ENCODE measurements at regions of chr14 and their contacts with region 1.

Region 1: DNA sequence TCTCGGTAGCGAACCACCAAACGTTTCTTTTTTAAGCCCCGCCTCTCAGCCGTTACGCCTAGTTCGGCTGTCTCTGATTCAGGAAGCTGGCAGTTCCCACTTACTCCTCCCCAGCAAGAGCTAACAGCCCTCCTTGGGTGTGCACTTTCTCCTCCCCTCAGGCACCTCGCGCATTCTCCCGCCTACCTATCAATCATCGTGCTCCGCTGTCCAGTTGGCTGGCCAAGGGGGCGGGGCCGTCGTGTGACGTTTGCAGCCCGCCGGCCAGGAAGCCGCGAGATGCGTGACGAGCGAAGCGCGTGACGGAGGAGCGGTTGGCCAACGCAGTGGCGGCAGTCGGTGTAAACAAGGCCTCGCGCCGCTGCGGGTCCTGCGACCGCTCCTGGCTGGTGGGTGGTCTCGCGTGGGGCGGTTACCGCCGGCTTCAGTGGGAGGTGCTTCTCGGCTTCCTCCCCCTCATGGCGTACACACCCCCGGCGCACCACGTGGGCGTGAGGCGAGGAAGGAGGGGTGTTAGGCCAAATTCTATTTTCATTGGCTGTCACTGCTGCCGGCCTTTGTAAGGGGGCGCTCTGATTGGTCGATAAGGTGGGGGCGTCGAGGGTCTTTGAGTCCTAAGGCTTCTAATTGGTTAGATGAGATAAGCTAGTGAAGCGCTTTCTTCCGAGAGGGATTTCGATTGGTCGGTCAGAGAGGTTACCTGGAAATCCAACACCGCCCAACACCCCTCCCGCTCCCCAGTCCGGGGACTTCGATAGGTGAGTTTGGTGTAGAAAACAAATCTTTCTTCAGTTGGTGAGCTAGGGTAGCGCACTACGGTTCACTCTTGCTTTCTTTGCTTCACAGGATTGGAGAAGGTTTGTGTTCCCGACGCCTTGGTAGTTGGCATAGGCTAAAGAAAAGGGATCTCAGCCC is at the starts of genes DCAF11 and NRL:
- DNase-seq: peak; percentile 95 to 100 (median 98)
- ATAC-seq: peak; percentile 81
- H3K4me3 ChIP-seq: peak within 1 kb of the TSS; percentile 77
- H3K4me3 Mint-ChIP-seq: peak within 1 kb of the TSS; percentile 98
- H3K27ac ChIP-seq: peak within 1 kb of the TSS; percentile 98 to 99
- H3K27ac Mint-ChIP-seq: peak within 1 kb of the TSS; percentile 98
- H3K4me1 ChIP-seq: peaks cover 42% of the 10 kb centered on the region
- H3K4me1 Mint-ChIP-seq: peaks cover 35% of the 10 kb centered on the region
- H3K27me3 ChIP-seq: no peaks in the 10 kb centered on the region
- H3K27me3 Mint-ChIP-seq: no peaks in the 10 kb centered on the region
- CTCF ChIP-seq: no peak
- total RNA-seq, gene DCAF11: 74.8 to 75.3 TPM
- total RNA-seq, gene NRL: 1.6 to 1.9 TPM

Region 2: GRCh38 chr14:23376482-23377197 is 738.2 kb before region 1 on chr14 and contains the start of gene CMTM5:
- CTCF ChIA-PET with region 1: no interaction called
- POLR2A ChIA-PET with region 1: no interaction called
- intact Hi-C with region 1: no loop called
- DNase-seq: no peak
- ATAC-seq: no peak
- H3K4me3 ChIP-seq: no peak within 1 kb of the TSS
- H3K4me3 Mint-ChIP-seq: no peak within 1 kb of the TSS
- H3K27ac ChIP-seq: no peak within 1 kb of the TSS
- H3K27ac Mint-ChIP-seq: no peak within 1 kb of the TSS
- H3K4me1 ChIP-seq: no peaks in the 10 kb centered on the region
- H3K4me1 Mint-ChIP-seq: no peaks in the 10 kb centered on the region
- H3K27me3 ChIP-seq: no peaks in the 10 kb centered on the region
- H3K27me3 Mint-ChIP-seq: peaks cover 9% of the 10 kb centered on the region
- CTCF ChIP-seq: no peak
- total RNA-seq, gene CMTM5: not detected

Region 3: GRCh38 chr14:23469127-23469905 is 645.5 kb before region 1 on chr14 and contains the start of gene NGDN:
- CTCF ChIA-PET with region 1: no interaction called
- POLR2A ChIA-PET with region 1: interaction called, 3 read pairs
- intact Hi-C with region 1: loop called in 1 of 2 experiments (anchors 5 kb)
- DNase-seq: peak; percentile 81 to 99 (median 88)
- ATAC-seq: peak; percentile 90
- H3K4me3 ChIP-seq: peak within 1 kb of the TSS; percentile 87
- H3K4me3 Mint-ChIP-seq: no peak within 1 kb of the TSS
- H3K27ac ChIP-seq: peak within 1 kb of the TSS; percentile 67 to 92
- H3K27ac Mint-ChIP-seq: no peak within 1 kb of the TSS
- H3K4me1 ChIP-seq: peaks cover 14% of the 10 kb centered on the region
- H3K4me1 Mint-ChIP-seq: peaks cover 7% of the 10 kb centered on the region
- H3K27me3 ChIP-seq: no peaks in the 10 kb centered on the region
- H3K27me3 Mint-ChIP-seq: no peaks in the 10 kb centered on the region
- CTCF ChIP-seq: peak; percentile 74
- total RNA-seq, gene NGDN: 146 to 149 TPM

Region 4: DNA sequence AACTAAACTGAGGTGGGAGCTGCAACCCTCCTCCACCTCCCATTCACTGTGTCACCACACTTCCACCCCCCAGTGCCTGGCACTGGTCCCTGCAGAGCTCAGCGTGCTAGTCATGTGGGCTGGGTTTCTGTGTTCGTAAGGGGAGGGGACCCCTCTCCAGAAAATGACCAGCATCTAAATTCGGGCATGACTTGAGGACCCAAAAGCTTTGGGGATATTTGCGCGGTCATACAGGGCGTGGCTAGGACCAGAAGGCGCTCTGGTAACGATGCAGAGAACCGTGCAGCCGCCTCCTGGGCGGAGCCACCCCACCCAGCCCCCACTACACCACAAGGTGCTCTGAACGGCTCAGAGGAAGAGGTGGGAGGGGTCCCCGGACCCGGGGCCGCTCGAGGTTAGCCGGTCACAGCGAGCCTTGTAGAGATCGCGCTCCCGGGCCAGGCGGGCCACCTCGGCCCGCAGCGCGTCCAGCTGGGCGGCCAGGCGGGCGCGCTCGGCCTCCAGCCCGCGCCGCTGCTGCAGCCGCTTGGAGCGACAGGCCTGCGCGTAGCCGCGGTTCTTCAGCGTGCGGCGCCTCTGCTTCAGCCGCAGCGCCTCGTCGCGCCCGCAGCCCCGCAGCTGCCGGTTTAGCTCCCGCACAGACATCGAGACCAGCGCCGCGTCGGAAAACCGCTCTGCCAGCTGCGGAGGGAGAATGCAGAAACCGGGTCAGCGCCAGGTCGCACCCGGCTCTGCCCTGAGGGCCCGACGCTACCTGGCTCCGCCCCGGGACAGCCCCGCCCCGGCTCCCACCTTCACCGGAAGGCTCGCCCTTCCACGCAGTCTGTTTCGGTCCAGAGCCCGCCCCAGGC is 33.7 kb before region 1 on chr14:
- CTCF ChIA-PET with region 1: no interaction called
- POLR2A ChIA-PET with region 1: interaction called, 48 read pairs
- intact Hi-C with region 1: no loop called
- DNase-seq: peak; percentile 47 to 82 (median 68)
- ATAC-seq: peak; percentile 90
- H3K4me3 ChIP-seq: peak overlapping the region; percentile 56
- H3K4me3 Mint-ChIP-seq: peak overlapping the region; percentile 93
- H3K27ac ChIP-seq: peak overlapping the region; percentile 2 to 52
- H3K27ac Mint-ChIP-seq: peak overlapping the region; percentile 90
- H3K4me1 ChIP-seq: peaks cover 21% of the 10 kb centered on the region
- H3K4me1 Mint-ChIP-seq: peaks cover 24% of the 10 kb centered on the region
- H3K27me3 ChIP-seq: no peaks in the 10 kb centered on the region
- H3K27me3 Mint-ChIP-seq: no peaks in the 10 kb centered on the region
- CTCF ChIP-seq: no peak

Region 5: GRCh38 chr14:24135834-24136542 is 21.2 kb after region 1 on chr14 and contains the start of gene PSME1:
- CTCF ChIA-PET with region 1: interaction called, 11 read pairs
- POLR2A ChIA-PET with region 1: interaction called, 296 read pairs
- intact Hi-C with region 1: loop called (anchors 1 kb)
- DNase-seq: peak; percentile 89 to 97 (median 95)
- ATAC-seq: peak; percentile 97
- H3K4me3 ChIP-seq: peak within 1 kb of the TSS; percentile 74
- H3K4me3 Mint-ChIP-seq: peak within 1 kb of the TSS; percentile 94
- H3K27ac ChIP-seq: peak within 1 kb of the TSS; percentile 72 to 88
- H3K27ac Mint-ChIP-seq: peak within 1 kb of the TSS; percentile 85
- H3K4me1 ChIP-seq: peaks cover 68% of the 10 kb centered on the region
- H3K4me1 Mint-ChIP-seq: peaks cover 70% of the 10 kb centered on the region
- H3K27me3 ChIP-seq: no peaks in the 10 kb centered on the region
- H3K27me3 Mint-ChIP-seq: no peaks in the 10 kb centered on the region
- CTCF ChIP-seq: no peak
- total RNA-seq, gene PSME1: 166 to 171 TPM

Region 6: DNA sequence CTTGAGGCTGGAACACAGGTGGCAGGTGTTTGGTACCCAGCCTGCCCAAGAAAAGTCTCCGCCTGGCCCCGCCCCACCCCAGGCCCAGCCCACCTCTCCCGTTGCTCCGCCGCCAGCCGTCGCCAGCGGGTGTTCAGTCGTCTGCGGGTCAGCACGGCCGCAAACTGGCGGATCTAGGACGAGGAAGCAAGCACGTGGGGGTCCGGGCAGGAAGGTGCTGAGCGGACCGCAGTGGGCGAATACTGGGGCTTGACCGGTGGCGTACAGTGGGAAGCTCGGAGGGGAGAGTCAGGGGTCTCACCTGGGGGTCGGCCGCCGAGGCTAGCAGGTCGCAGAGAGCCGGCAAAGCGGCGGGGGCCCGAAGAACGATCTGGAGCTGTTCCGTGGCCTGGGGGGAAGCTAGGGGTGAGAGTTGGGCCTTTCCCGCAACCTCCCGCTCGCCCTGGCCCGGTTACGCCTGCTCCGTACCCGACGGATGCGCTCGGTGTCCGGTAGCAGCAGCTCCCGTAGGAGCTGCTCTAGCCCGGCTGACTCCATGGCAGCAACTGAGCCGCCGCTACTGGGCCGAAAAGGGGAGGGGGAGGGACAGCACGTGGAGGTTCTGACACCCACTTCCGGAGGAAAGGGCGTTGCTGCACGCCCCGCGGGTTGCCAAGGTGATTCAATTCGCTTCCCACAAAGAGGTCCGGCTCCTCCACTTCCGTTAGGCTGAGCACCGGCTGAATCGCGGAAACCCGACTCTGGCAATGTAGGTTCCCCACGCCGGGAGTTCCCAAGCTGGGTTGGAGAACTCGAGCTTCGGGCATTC is 73.7 kb after region 1 on chr14 and contains the start of gene IPO4:
- CTCF ChIA-PET with region 1: no interaction called
- POLR2A ChIA-PET with region 1: interaction called, 21 read pairs
- intact Hi-C with region 1: loop called in 1 of 2 experiments (anchors 2 kb)
- DNase-seq: peak; percentile 86 to 98 (median 94)
- ATAC-seq: peak; percentile 91
- H3K4me3 ChIP-seq: peak within 1 kb of the TSS; percentile 75
- H3K4me3 Mint-ChIP-seq: peak within 1 kb of the TSS; percentile 93
- H3K27ac ChIP-seq: peak within 1 kb of the TSS; percentile 70 to 88
- H3K27ac Mint-ChIP-seq: peak within 1 kb of the TSS; percentile 91
- H3K4me1 ChIP-seq: peaks cover 32% of the 10 kb centered on the region
- H3K4me1 Mint-ChIP-seq: peaks cover 45% of the 10 kb centered on the region
- H3K27me3 ChIP-seq: no peaks in the 10 kb centered on the region
- H3K27me3 Mint-ChIP-seq: no peaks in the 10 kb centered on the region
- CTCF ChIP-seq: no peak
- total RNA-seq, gene IPO4: 36.6 to 37.9 TPM

Region 7: DNA sequence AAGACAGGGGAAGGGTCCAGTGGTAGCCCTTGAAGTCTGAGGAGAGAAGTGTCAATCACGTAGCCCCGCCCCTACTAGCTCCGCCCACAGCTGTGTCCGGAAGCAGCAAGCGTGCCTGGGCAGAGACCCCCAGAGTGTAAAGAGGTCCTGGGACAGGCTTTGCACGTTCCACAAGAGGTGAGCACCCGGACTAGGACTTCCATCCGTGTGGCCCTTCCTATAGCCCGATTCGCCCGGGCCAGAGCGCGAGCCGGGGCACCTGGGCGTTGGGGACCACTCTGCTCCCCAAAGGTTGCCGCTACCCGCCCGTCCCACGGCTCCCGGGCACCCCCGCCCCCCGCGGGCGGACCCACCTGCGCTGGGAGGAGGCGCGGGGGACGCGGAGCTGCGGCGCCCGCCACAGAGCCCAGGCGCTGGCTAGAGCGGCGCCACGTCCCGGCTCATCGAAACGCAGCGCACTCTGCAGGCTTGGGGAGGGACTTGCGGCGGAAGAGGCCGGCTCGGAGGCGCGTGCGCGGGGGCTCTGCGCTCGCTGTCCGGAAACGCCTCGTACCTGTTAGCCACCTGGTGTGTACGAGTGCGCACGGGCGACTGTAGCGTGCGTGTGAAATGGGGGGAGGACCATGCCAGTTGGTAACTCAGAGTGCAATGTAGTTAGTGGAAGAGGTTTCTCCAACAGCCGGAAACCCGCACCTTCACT is 156.5 kb after region 1 on chr14 and contains the start of gene RABGGTA:
- CTCF ChIA-PET with region 1: no interaction called
- POLR2A ChIA-PET with region 1: interaction called, 14 read pairs
- intact Hi-C with region 1: no loop called
- DNase-seq: peak; percentile 84 to 99 (median 92)
- ATAC-seq: peak; percentile 83
- H3K4me3 ChIP-seq: peak within 1 kb of the TSS; percentile 86
- H3K4me3 Mint-ChIP-seq: peak within 1 kb of the TSS; percentile 96
- H3K27ac ChIP-seq: peak within 1 kb of the TSS; percentile 92 to 95
- H3K27ac Mint-ChIP-seq: peak within 1 kb of the TSS; percentile 97
- H3K4me1 ChIP-seq: peaks cover 43% of the 10 kb centered on the region
- H3K4me1 Mint-ChIP-seq: peaks cover 40% of the 10 kb centered on the region
- H3K27me3 ChIP-seq: no peaks in the 10 kb centered on the region
- H3K27me3 Mint-ChIP-seq: no peaks in the 10 kb centered on the region
- CTCF ChIP-seq: peak; percentile 75
- total RNA-seq, gene RABGGTA: 52.3 to 55.2 TPM

Measured in CD4-positive, alpha-beta T cell (primary cell).